Dorsolateral prefrontal cortex (tissue), 120 donors: ENCODE measurements at regions of chr14 and their contacts with region 1.

Region 1: GRCh38 chr14:105627711-105628110 is 101.3 kb downstream of the TMEM121 start:
- DNase-seq: no peak
- H3K4me3 ChIP-seq: no peak overlapping the region
- H3K27ac ChIP-seq: no peak overlapping the region
- H3K27me3 ChIP-seq: peaks cover 0 to 13% (median 0%) of the 10 kb centered on the region in 45 donors
- CTCF ChIP-seq: no peak

Region 2: DNA sequence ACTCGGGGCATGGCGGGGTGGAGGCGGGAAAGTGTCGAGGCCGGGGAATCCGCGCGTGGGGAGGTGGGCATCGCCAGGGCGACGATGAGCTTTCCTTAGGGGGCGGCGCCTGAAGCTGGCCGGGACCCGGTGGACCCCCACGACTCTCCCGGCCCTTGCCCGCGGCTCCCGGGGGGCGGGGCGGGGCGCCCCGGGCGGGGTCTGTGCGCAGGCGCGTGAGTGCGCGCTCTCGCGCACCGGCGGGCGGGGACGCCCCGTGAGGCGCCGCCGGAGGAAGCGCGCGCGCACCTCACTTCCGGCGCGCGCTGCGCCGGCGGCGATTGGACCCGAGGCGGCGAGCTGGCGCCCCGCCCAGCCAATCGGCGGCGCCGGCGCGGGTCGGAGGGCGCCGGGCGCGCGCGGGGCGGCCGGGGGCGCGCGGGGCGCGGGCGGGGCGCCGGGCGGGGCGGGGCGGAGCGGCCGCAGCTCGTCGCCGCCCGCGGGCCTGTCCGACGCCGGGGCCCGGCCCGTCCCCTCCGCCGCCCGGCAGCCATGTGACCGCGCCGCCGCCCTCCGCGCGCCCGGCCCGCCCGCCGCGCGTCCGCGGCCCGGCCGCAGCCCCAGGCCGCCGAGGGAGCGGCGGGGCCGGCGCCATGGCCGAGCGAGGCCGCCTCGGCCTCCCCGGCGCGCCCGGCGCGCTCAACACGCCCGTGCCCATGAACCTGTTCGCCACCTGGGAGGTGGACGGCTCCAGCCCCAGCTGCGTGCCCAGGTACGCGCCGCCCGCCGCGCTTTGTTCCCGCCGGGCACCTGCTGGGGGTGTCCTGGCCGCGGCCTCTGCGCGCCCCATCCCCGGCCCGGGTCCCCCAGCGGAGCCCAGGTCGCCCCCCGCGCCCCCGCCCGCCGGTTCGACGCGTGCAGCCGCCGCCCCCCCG is 313.2 kb before region 1 on chr14 and contains the start of gene PACS2:
- intact Hi-C with region 1: no loop called
- DNase-seq: peak in 5 of 10 donors; percentile 47 to 85 (median 63)
- H3K4me3 ChIP-seq: peak within 1 kb of the TSS; percentile 55 to 94 (median 84)
- H3K27ac ChIP-seq: peak within 1 kb of the TSS; percentile 84 to 99 (median 98)
- H3K27me3 ChIP-seq: no peaks in the 10 kb centered on the region
- CTCF ChIP-seq: no peak
- total RNA-seq, gene PACS2: 131 to 394 (median 200) TPM

Region 3: GRCh38 chr14:105617201-105617777 is 10.4 kb before region 1 on chr14:
- intact Hi-C with region 1: loop called in 1 of 2 experiments (anchors 2 kb)
- DNase-seq: peak in 2 of 10 donors; percentile 30 to 42
- H3K4me3 ChIP-seq: no peak overlapping the region
- H3K27ac ChIP-seq: no peak overlapping the region
- H3K27me3 ChIP-seq: peaks cover 0 to 21% (median 0%) of the 10 kb centered on the region in 45 donors
- CTCF ChIP-seq: no peak

Region 4: DNA sequence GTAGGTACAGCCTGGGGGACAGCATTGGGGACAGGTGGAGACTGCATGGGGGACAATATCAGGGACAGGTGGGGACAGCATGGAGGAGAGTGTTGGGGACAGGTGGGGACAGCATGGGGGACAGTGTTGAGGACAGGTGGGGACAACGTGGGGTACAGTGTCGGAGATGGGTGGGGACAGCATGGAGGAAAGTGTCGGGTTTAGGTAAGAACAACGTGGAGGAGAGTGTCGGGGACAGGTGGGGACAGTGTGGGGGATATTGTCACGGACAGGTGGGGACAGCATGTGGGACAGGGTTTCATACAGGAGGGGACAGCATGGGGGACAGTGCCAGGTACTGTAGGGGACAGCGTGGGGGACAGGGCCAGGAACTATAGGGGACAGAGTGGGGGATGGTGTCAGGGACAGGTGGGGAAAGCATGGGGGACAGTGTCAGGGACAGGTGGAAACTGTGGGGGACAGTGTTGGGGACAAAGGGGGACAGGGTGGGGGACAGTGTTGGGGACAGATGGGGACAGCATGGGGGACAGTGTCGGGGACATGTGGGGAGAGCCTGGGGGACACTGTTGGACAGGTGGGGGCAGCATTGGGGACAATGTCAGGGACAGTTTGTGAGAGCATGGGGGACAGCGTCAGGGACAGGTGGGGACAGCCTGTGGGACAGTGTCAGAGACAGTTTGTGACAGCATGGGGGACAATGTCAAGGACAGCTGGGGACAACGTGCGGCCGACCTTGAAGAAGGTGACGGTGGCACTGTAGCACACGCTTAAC is 111.8 kb after region 1 on chr14:
- intact Hi-C with region 1: loop called in 1 of 2 experiments (anchors 5 kb)
- DNase-seq: no peak
- H3K4me3 ChIP-seq: no peak overlapping the region
- H3K27ac ChIP-seq: no peak overlapping the region
- H3K27me3 ChIP-seq: no peaks in the 10 kb centered on the region
- CTCF ChIP-seq: no peak